HAP-1 (cell line): ENCODE measurements at regions of chr20 and their contacts with region 1.

Region 1: GRCh38 chr20:24781422-24781980 is 167.6 kb upstream of the CST7 start:
- DNase-seq: peak in 1 of 2 experiments; percentile 15
- H3K4me3 ChIP-seq: no peak overlapping the region
- H3K4me1 ChIP-seq: no peaks in the 10 kb centered on the region
- H3K27me3 ChIP-seq: no peaks in the 10 kb centered on the region

Region 2: GRCh38 chr20:24545168-24545567 is 236.3 kb before region 1 on chr20:
- in situ Hi-C with region 1: no loop called
- DNase-seq: no peak
- H3K4me3 ChIP-seq: no peak overlapping the region
- H3K4me1 ChIP-seq: no peaks in the 10 kb centered on the region
- H3K27me3 ChIP-seq: no peaks in the 10 kb centered on the region

Region 3: GRCh38 chr20:24842918-24843715 is 61.6 kb after region 1 on chr20:
- in situ Hi-C with region 1: loop called (anchors 10 kb)
- DNase-seq: no peak
- H3K4me3 ChIP-seq: no peak overlapping the region
- H3K4me1 ChIP-seq: no peaks in the 10 kb centered on the region
- H3K27me3 ChIP-seq: no peaks in the 10 kb centered on the region; the same call in 1 of the 2 replicates